ENCODE measurements at regions of chr2 and their contacts with region 1.

Region 1: DNA sequence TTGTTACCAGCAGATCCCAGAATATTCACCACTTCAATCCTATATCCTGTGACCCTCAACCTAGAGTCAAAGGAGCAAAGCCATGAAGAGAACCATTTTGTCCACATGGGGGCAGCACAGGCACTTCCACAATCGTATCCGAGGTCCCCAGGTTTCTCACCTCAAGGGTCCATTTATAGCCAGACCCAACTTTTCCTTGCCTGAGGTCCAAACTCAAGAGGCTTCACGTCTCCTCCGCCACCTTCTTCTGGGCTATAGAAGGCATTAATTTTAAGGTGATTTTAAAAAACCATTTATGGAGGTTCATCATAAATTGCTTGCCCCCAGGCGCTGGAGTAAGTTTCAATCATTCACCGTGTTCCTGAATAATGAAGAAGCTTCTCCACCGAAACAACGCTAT is 111.6 kb upstream of the NABP1 start:
- DNase-seq: peak; percentile 75
- H3K4me3 Mint-ChIP-seq: no peak overlapping the region
- H3K27ac Mint-ChIP-seq: no peak overlapping the region
- H3K4me1 Mint-ChIP-seq: peaks cover 21% of the 10 kb centered on the region
- H3K27me3 Mint-ChIP-seq: peaks cover 4% of the 10 kb centered on the region

Region 2: GRCh38 chr2:191617575-191617974 is 51.2 kb after region 1 on chr2:
- CTCF ChIA-PET with region 1: interaction called, 4 read pairs
- POLR2A ChIA-PET with region 1: no interaction called
- intact Hi-C with region 1: loop called (anchors 1 kb)
- DNase-seq: peak; percentile 61
- H3K4me3 Mint-ChIP-seq: peak overlapping the region; percentile 34
- H3K27ac Mint-ChIP-seq: peak overlapping the region; percentile 94
- H3K4me1 Mint-ChIP-seq: peaks cover 58% of the 10 kb centered on the region
- H3K27me3 Mint-ChIP-seq: no peaks in the 10 kb centered on the region

Region 3: GRCh38 chr2:191691016-191691735 is 124.8 kb after region 1 on chr2:
- CTCF ChIA-PET with region 1: interaction called, 28 read pairs
- POLR2A ChIA-PET with region 1: interaction called, 4 read pairs
- intact Hi-C with region 1: loop called (anchors 1 kb)
- DNase-seq: peak; percentile 31
- H3K4me3 Mint-ChIP-seq: no peak overlapping the region
- H3K27ac Mint-ChIP-seq: peak overlapping the region; percentile 60
- H3K4me1 Mint-ChIP-seq: peaks cover 55% of the 10 kb centered on the region
- H3K27me3 Mint-ChIP-seq: no peaks in the 10 kb centered on the region

Region 4: GRCh38 chr2:191740016-191740419 is 173.7 kb after region 1 on chr2:
- CTCF ChIA-PET with region 1: interaction called, 3 read pairs
- POLR2A ChIA-PET with region 1: no interaction called
- intact Hi-C with region 1: loop called (anchors 2 kb)
- DNase-seq: peak; percentile 54
- H3K4me3 Mint-ChIP-seq: no peak overlapping the region
- H3K27ac Mint-ChIP-seq: peak overlapping the region; percentile 50
- H3K4me1 Mint-ChIP-seq: peaks cover 15% of the 10 kb centered on the region
- H3K27me3 Mint-ChIP-seq: peaks cover 2% of the 10 kb centered on the region

Region 5: GRCh38 chr2:191748059-191748461 is 181.7 kb after region 1 on chr2:
- CTCF ChIA-PET with region 1: no interaction called
- POLR2A ChIA-PET with region 1: no interaction called
- intact Hi-C with region 1: loop called (anchors 2 kb)
- DNase-seq: no peak
- H3K4me3 Mint-ChIP-seq: no peak overlapping the region
- H3K27ac Mint-ChIP-seq: no peak overlapping the region
- H3K4me1 Mint-ChIP-seq: peaks cover 15% of the 10 kb centered on the region
- H3K27me3 Mint-ChIP-seq: peaks cover 4% of the 10 kb centered on the region

Region 6: DNA sequence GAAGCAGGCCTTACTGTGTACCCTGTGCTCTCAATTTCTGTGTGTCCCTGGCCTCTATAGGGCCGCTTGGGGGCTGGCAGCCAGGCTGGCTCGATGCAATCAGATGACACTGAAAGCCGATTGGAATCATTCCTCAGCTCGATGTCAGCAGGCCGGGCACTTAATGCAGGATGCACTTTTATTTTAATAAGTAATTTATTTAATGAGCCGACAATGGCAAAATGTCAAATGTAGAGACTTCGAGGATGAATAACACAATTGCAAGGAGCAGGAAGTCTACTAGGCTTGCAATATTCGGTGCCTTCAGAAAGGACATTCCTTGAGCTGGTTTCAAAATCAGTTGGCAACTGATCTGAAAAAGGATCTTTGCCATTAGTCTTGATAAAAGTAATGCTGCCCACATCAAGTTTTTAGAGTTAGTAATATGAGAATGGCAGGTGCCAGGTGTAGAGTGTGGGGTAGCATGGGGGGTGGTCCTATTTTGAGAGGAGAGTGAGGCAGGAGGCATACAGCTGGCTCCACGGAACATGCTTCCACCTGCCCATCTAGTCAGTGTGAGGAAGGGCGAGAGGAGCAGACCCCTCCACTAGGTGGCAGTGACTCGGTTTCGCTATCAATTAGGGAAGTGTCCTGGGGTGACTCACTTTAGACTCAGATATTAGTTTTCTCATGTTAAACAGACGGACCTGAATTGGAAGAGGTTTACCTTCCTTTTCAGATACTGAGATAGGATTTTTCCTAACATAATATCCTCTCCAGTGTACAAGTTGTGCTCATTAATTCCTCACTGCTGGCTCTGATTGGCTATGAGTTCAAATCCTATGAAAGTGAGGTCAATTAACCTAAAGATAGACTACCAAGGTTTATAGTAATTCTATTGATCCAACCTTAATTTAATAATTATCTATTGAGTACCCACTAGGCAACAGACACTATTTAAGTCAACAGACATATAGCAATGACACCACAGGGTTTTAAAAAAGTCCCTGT is 192.5 kb after region 1 on chr2:
- CTCF ChIA-PET with region 1: no interaction called
- POLR2A ChIA-PET with region 1: no interaction called
- intact Hi-C with region 1: loop called (anchors 1 kb)
- DNase-seq: peak; percentile 64
- H3K4me3 Mint-ChIP-seq: no peak overlapping the region
- H3K27ac Mint-ChIP-seq: no peak overlapping the region
- H3K4me1 Mint-ChIP-seq: peaks cover 3% of the 10 kb centered on the region
- H3K27me3 Mint-ChIP-seq: peaks cover 2% of the 10 kb centered on the region

Region 7: GRCh38 chr2:192035731-192036442 is 469.5 kb after region 1 on chr2:
- CTCF ChIA-PET with region 1: no interaction called
- POLR2A ChIA-PET with region 1: no interaction called
- intact Hi-C with region 1: no loop called
- DNase-seq: no peak
- H3K4me3 Mint-ChIP-seq: no peak overlapping the region
- H3K27ac Mint-ChIP-seq: no peak overlapping the region
- H3K4me1 Mint-ChIP-seq: no peaks in the 10 kb centered on the region
- H3K27me3 Mint-ChIP-seq: no peaks in the 10 kb centered on the region